ENCODE measurements at regions of chr6 and their contacts with region 1.

Region 1: DNA sequence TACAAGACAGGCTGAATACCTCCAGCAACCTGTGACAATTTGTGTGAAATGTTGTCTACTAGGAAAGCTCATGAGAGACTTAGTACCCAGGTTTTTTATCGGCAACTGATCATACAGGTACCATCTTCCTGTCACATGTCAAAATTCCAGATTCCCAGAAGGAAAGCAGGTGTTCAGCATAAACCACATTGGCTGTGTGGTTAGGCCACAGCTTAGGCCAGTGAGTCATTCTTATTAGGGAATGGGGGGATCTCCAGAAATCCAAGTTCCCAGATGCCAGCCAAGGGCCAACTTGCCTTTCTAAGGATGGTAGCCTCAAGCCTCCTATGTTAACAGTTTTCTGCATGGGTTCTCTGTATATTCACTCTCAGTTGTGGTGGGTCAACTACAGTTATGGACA is 65.9 kb downstream of the FAM184A start:
- DNase-seq: no peak
- CTCF ChIP-seq: no peak

Region 2: DNA sequence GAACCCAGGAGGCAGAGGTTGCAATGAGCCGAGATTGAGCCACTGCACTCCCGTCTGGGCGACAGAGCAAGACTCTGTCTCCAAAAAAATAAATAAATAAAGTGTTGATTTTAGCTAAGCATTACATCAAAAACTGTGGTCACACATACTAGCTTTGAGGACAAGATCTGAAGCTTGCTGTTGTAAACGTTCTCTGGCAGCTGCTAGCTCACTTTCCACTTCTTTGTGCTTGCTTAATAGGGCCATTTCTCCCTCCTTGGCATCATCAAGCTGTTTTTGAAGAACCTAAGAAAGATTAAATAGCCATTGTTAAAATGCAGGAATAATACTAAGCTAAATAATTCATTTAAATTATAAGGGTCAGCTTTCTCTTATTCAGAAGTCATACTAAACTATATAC is 10.3 kb after region 1 on chr6:
- CTCF ChIA-PET with region 1: interaction called, 12 read pairs
- POLR2A ChIA-PET with region 1: no interaction called
- DNase-seq: no peak
- CTCF ChIP-seq: no peak

Region 3: DNA sequence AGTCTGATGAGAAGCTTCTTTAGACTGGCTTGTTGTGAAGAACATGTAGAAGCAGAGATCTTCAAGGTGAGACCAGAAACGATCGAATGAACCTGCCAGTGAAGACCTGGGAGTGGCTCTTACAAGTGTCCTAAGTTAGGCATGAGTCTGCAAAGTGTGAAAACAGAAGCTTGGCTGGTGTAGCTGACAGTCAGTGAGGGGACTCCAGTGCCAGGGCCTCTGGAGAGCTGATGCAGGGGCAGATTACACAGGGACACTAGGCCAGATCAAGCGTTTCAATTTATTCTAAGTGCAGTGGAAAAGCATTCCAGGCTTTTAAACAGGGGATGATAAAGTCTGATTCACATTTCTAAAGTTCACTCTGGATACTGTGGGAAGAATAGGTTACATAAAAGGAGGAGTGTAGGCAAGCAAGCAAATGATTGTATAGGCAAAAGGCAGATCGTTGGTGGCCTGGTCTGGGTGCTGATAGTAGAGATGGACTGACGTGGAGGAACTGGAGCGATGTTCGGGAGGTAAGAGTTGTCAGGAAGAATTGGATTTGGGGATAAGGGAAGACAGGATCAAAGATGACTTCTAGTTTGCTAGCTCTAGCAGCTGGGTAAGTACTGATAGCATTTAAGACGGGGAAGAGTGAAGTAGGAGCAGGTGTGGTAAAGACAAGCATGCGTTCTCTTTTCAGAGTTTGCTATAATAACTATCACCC is 203.5 kb after region 1 on chr6:
- CTCF ChIA-PET with region 1: no interaction called
- POLR2A ChIA-PET with region 1: no interaction called
- DNase-seq: no peak
- CTCF ChIP-seq: no peak